Activated T-helper 2 cell treated with anti-CD3 and anti-CD28 coated beads, Interferon-gamma antibody, Interleukin-2, Interleukin-4, amounts not matched to agents 10 μg/mL and 5 μg/mL and 100 μg/mL, durations not matched to agents 14 hours and 24 hours and 36 hours (primary cell): ENCODE measurements at regions of chr9 and their contacts with region 1.

Region 1: DNA sequence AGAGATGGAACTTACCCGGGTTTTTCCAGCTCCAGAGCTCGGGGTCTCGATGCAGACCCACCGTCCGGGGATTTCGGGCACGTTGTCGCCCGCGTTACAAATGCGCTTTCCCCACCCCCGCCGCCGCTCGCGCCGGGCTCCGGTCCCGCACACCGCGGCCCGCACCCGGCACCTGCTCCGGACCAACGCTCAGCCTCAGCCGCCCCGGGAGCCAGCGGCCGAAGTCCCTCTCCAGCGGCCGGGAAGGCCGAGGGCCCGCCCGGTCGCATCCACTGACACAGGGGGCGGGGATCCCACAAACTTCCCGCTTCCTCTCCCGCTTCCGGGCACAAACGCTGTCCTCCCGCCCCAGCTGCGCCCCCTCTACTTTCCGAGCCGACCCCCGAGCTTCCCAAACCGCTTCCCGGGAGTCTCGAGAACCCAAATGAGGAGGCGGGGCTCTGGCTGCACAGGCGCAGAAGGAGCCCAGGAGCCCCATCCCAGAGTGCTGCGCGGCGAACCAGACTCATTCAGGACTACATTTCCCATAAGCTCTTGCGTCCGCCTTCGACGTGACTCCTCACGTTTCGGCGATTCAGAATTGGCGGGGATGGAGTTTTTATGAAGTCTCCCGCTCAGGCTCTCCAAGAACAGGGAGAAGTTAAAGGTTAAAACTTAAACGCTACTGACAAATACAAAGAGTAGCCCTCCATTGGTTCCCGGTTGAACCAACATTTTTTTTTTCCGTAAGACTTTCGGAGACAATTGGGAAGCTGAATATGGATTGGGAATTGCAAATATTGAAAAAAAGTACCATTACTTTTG is at the start of gene ZNF782:
- DNase-seq: peak; percentile 79
- H3K4me3 Mint-ChIP-seq: peak within 1 kb of the TSS; percentile 100
- H3K27ac Mint-ChIP-seq: peak within 1 kb of the TSS; percentile 100
- H3K4me1 Mint-ChIP-seq: peaks cover 48% of the 10 kb centered on the region
- H3K27me3 Mint-ChIP-seq: peaks cover 17% of the 10 kb centered on the region
- total RNA-seq, gene ZNF782: 4.5 and 4.7 TPM in 2 replicates

Region 2: GRCh38 chr9:96418074-96418809 is 436.0 kb before region 1 on chr9 and contains the start of gene ZNF367:
- intact Hi-C with region 1: loop called (anchors 10 kb)
- DNase-seq: peak; percentile 95
- H3K4me3 Mint-ChIP-seq: peak within 1 kb of the TSS; percentile 89
- H3K27ac Mint-ChIP-seq: peak within 1 kb of the TSS; percentile 91
- H3K4me1 Mint-ChIP-seq: peaks cover 30% of the 10 kb centered on the region
- H3K27me3 Mint-ChIP-seq: no peaks in the 10 kb centered on the region
- total RNA-seq, gene ZNF367: 19.5 and 19.6 TPM in 2 replicates

Region 3: DNA sequence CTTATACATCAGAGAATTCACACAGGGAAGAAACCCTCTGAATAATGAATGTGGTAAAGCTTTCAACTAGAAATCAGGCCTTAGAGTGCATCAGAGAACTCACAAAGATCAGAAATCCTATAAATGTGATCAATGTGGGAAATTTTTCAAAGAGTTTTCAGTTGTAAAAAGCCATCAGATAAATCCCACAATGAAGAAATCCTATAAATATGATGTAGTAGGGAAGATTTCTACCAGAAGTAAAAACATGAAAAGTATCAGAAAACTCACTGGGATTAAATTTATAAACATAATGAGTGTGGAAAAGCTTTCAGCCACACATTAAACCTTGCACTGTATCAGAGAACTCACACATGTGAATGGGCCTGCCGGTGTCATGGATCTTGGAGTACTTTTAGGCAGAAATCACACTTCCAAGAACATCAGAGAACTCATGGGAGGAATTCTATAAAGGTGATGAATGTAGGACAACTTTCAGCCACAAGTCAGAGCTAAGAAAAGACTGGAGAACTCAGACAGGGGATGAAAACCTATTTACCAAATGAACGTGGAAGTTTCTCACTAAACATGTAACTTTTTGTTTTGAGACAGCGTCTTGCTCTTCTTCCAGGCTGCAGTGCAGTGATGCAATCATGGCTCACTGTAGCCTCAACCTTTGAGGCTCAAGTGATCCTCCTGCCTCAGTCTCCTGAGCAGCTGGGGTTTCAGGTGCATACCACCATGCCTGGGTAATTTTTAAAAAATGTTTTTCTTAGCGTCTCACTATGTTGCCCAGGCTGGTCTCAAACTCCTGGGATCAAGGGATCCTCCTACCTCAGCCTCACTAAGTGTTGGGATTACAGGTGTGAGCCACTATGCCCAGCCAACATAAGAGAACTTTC is 115.9 kb before region 1 on chr9:
- intact Hi-C with region 1: no loop called
- DNase-seq: no peak
- H3K4me3 Mint-ChIP-seq: no peak overlapping the region
- H3K27ac Mint-ChIP-seq: no peak overlapping the region
- H3K4me1 Mint-ChIP-seq: no peaks in the 10 kb centered on the region
- H3K27me3 Mint-ChIP-seq: no peaks in the 10 kb centered on the region

Region 4: DNA sequence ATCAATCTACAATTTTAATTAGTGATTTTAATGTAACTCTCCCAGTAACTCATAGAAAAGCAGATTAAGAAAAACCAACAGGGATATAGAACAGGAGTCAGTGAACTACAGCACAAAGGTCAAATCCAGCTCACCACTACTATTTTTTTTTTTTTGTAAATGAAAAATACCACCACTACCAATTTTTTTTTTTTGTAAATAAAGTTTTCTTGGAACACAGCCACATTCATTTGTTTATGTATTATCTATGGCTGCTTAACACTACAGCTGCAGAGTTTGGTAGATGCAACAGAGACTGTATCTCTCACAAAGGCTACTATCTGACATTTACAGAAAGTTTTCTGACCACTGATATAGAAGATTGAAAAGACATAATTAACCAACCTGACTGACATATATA is 88.1 kb before region 1 on chr9:
- intact Hi-C with region 1: no loop called
- DNase-seq: no peak
- H3K4me3 Mint-ChIP-seq: no peak overlapping the region
- H3K27ac Mint-ChIP-seq: no peak overlapping the region
- H3K4me1 Mint-ChIP-seq: no peaks in the 10 kb centered on the region
- H3K27me3 Mint-ChIP-seq: no peaks in the 10 kb centered on the region

Region 5: DNA sequence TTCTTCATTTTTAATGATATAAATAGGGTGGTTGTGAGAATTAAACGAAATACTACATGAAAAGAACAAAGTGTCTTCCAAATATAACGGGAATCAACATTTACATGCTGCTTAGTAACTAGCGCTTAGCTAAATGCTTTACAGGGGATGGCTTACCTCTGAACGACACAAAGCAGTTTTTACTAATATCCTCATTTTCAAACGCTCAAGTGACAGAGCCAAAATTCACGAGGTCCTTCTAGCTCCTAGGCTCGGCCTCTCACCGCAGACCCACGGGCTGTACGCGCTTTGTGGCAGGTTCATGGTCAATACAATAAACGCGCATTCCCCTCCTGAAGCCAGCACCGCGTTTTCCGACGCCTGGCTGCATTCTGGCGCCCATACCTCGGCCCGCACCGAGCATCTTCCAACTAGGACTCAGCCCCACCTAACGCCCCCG is 76.8 kb before region 1 on chr9:
- intact Hi-C with region 1: loop called (anchors 1 kb)
- DNase-seq: no peak
- H3K4me3 Mint-ChIP-seq: peak overlapping the region; percentile 100
- H3K27ac Mint-ChIP-seq: peak overlapping the region; percentile 91
- H3K4me1 Mint-ChIP-seq: peaks cover 24% of the 10 kb centered on the region
- H3K27me3 Mint-ChIP-seq: no peaks in the 10 kb centered on the region

Region 6: DNA sequence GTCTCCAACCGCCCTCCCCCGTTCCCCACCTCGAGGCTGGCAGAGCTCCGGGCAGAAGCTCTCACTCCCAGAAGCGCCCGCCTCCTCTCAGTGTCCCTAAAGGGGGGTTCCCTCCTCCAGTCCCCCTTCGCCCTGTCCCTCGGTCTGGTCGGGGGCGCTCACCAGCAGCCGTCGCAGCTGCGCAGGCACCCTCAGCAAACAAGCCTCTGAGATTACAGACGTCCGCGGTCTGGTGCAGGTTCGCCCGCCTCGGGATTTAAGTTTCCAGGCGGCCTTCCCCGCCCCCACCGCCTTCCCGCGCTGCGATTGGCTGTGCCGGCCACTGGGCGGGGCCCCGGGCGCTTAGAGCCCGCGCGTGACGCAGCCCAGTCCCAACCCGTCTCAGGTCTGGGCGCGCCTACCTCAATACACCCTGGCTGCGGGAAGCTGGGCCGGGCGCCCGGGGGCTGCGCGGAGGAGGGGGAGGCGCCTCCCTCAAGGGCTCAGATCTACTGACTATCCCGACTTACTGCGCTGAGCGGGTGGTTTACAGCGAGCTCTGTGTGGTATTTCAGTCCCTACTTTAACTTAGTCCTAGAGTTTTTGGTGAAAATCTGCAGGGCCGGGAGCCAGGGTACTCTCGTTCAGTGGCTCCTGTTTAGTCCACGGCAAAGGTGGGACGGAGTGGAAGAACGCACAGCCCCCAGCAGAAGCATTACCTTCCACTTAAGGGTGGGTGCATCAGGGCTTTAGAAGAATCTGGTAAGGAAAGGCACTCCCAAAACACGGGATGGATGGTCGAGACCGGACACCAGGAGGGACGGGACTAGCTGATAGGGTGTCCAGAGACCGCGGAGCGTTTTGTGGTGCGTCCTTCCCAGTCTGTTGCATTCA is 184.9 kb after region 1 on chr9 and contains the start of gene CTSV:
- intact Hi-C with region 1: loop called (anchors 2 kb)
- DNase-seq: peak; percentile 81
- H3K4me3 Mint-ChIP-seq: peak within 1 kb of the TSS; percentile 79
- H3K27ac Mint-ChIP-seq: no peak within 1 kb of the TSS
- H3K4me1 Mint-ChIP-seq: peaks cover 6% of the 10 kb centered on the region
- H3K27me3 Mint-ChIP-seq: peaks cover 43% of the 10 kb centered on the region
- total RNA-seq, gene CTSV: 0.48 and 0.78 TPM in 2 replicates

Region 7: DNA sequence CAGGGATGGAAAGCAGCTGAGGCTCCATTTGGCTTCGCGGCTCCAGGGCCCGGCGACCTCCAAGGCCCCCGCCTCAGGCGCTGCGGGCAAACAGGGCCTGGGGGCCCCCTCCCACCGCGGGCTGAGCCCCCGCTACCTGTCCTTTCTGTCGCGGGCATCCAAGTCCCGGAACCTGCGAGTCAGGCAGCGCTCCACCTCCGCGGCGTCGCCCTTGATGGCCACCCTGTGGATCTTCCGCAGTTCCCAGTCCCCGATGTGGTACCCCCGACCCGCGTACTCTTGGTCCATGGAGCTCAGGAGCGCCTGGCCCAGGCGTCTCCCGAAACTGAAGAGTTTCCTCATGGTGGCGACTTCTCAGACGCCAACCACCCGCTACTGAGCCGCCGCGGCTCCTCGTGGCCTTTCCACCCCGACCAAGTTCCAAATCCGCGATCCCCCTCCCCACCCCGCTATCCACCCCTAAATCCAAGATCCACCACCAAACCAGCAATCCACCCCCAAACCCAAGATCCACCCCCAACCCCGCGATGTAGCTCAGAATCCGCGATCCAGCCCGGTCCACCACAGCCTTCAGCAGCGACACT is 366.7 kb after region 1 on chr9:
- intact Hi-C with region 1: loop called (anchors 5 kb)
- DNase-seq: no peak
- H3K4me3 Mint-ChIP-seq: peak overlapping the region; percentile 71
- H3K27ac Mint-ChIP-seq: no peak overlapping the region
- H3K4me1 Mint-ChIP-seq: peaks cover 5% of the 10 kb centered on the region
- H3K27me3 Mint-ChIP-seq: peaks cover 61% of the 10 kb centered on the region

Region 8: DNA sequence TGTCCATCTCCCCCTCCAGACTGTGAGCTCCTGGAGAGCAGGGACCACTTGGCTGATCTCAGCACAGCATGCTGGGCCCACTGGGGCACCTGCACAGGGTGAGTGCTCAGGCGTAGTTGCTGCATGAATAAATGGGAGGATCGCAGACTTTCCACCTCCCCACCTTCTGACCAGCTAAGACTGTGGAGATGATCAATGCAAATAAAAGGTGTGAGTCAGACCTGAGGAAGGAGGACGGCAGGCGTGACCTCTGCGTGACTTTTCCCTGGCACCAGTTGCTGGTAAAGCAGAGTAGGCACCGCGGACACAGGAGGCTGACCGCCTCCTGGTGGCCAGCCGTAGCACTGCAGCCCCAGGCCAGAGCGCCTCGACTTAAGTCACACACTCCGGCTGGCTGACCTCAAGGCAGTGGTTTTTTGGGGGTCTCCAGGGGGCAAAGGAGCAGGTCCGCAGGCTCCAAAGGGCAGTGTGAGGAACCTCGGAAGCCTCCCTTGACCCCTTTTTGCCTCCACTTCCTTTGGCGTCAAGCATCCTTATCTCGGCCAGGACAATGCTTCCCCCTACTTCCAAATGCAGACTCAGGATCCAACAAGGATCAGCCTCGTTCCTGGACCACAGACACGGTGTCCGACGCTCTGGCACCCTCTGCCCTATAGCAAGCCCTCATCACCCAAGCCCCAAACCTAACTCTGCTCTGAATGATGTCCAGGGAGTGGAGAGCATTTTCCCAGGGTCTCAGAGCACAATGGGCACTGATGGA is 544.9 kb after region 1 on chr9:
- intact Hi-C with region 1: loop called (anchors 1 kb)
- DNase-seq: peak; percentile 45
- H3K4me3 Mint-ChIP-seq: no peak overlapping the region
- H3K27ac Mint-ChIP-seq: no peak overlapping the region
- H3K4me1 Mint-ChIP-seq: peaks cover 10% of the 10 kb centered on the region
- H3K27me3 Mint-ChIP-seq: peaks cover 35% of the 10 kb centered on the region

Region 9: GRCh38 chr9:97632985-97633858 is 778.9 kb after region 1 on chr9 and contains the starts of genes NCBP1 and TSTD2:
- intact Hi-C with region 1: loop called (anchors 2 kb)
- DNase-seq: peak; percentile 96
- H3K4me3 Mint-ChIP-seq: peak within 1 kb of the TSS; percentile 89
- H3K27ac Mint-ChIP-seq: peak within 1 kb of the TSS; percentile 98
- H3K4me1 Mint-ChIP-seq: peaks cover 46% of the 10 kb centered on the region
- H3K27me3 Mint-ChIP-seq: no peaks in the 10 kb centered on the region
- total RNA-seq, gene NCBP1: 44.2 and 44.8 TPM in 2 replicates
- total RNA-seq, gene TSTD2: 18.8 and 19.4 TPM in 2 replicates